ENCODE measurements at regions of chr13 and their contacts with region 1.

Region 1: GRCh38 chr13:23871616-23872220 is 17.5 kb downstream of the MIPEP start:
- DNase-seq: no peak
- ATAC-seq: peak; percentile 20; the same call in 1 of the 3 replicates
- H3K4me3 ChIP-seq: no peak overlapping the region
- H3K27ac ChIP-seq: peak overlapping the region; percentile 45
- H3K4me1 ChIP-seq: peaks cover 9% of the 10 kb centered on the region
- H3K27me3 ChIP-seq: no peaks in the 10 kb centered on the region
- CTCF ChIP-seq: peak; percentile 30 to 62 (median 48); a peak in 5 of 6 replicates
- EP300 ChIP-seq: no peak
- POLR2A ChIP-seq: no peak
- RAD21 ChIP-seq: peak; percentile 78

Region 2: GRCh38 chr13:23510979-23511735 is 360.6 kb before region 1 on chr13:
- CTCF ChIA-PET with region 1: interaction called, 7 read pairs
- POLR2A ChIA-PET with region 1: no interaction called
- RAD21 ChIA-PET with region 1: no interaction called
- SMC1A ChIA-PET with region 1: interaction called, 3 read pairs
- in situ Hi-C with region 1: no loop called
- intact Hi-C with region 1: loop called (anchors 1 kb)
- DNase-seq: peak; percentile 62
- ATAC-seq: peak; percentile 94
- H3K4me3 ChIP-seq: no peak overlapping the region
- H3K27ac ChIP-seq: peak overlapping the region; percentile 50
- H3K4me1 ChIP-seq: peaks cover 14% of the 10 kb centered on the region
- H3K27me3 ChIP-seq: no peaks in the 10 kb centered on the region; a peak in 1 of 4 replicates
- CTCF ChIP-seq: peak; percentile 42 to 61 (median 60); a peak in 5 of 6 replicates
- EP300 ChIP-seq: no peak
- POLR2A ChIP-seq: no peak
- RAD21 ChIP-seq: peak; percentile 93

Region 3: DNA sequence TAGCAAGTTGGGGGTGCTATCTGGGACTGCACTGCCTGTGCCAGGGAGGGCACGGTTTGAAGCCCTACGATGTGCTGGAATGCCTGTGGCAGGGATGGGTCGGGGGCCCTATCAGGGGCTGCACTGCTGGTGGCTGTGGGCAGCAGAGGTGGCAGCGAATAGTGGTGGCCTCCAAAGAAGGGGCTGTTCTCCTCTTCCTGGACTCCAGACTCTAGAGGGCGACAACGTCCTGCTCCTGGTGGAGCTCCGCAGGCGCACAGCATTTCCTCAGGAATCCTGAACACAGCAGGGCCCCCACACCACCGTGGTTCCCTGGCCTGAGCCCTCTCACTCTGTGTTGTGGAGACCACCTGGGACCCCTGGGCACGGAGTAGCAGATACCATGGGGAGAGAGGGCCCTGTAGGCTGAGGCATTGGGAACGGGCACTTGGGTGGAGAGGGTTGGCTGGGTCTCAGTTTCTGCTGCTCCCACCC is 155.9 kb before region 1 on chr13:
- CTCF ChIA-PET with region 1: interaction called, 11 read pairs
- POLR2A ChIA-PET with region 1: no interaction called
- RAD21 ChIA-PET with region 1: interaction called, 4 read pairs
- SMC1A ChIA-PET with region 1: interaction called, 13 read pairs
- in situ Hi-C with region 1: no loop called
- intact Hi-C with region 1: loop called (anchors 2 kb)
- DNase-seq: no peak
- ATAC-seq: peak; percentile 40
- H3K4me3 ChIP-seq: no peak overlapping the region
- H3K27ac ChIP-seq: no peak overlapping the region
- H3K4me1 ChIP-seq: peaks cover 8% of the 10 kb centered on the region
- H3K27me3 ChIP-seq: no peaks in the 10 kb centered on the region
- CTCF ChIP-seq: peak; percentile 17 to 46 (median 38); a peak in 3 of 6 replicates
- EP300 ChIP-seq: no peak
- POLR2A ChIP-seq: no peak
- RAD21 ChIP-seq: peak; percentile 56

Region 4: DNA sequence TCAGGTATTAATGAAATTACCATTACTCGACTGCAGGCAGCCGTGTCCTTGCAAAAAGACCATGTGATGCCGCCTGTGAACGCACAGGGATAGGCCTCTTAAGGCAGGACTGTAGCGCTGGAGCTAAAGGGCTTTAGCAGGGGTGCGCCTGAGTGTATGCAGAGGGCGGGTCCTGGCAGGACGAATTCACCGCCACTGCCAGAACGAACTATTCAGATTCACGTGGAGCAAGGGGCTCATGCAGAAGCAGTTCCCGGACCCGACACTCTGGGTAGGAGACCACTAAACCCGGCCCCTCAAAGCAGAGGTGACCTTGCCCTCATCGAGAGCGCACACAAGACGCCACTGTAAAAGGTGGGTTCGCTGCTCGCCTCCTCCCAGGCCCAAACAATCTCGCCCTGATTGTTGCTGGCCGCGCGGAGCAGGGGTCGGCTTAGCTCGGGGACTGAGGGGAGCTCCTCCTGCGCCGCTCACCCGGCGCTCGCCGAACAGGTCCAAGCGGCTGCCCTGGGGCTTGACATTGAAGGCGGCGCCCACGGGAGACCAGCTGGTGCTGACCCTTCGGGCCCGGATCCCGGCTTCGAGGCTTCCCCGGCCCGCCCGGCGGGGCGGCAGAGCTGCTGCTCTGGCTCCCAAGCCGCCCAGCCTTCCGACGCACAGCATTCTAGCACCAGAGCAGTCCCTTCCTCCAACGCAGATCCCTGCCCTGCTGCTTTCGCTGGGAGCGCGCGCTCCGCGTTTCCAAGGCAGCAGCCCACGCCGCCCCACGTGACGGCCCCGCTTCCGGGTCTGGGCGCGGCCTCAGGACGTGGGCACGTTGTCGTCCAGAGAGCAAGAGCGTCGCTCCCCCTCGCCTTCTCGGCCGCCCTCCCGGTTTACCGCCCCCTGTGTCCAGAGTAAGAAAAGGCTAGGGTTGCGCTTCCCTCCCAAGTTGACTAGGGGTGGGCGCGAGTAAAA is 17.2 kb after region 1 on chr13 and contains the start of gene MIPEP:
- CTCF ChIA-PET with region 1: interaction called, 17 read pairs
- POLR2A ChIA-PET with region 1: no interaction called
- RAD21 ChIA-PET with region 1: interaction called, 4 read pairs
- SMC1A ChIA-PET with region 1: interaction called, 6 read pairs
- in situ Hi-C with region 1: no loop called
- intact Hi-C with region 1: no loop called
- DNase-seq: peak; percentile 79
- ATAC-seq: peak; percentile 96
- H3K4me3 ChIP-seq: peak within 1 kb of the TSS; percentile 70
- H3K27ac ChIP-seq: peak within 1 kb of the TSS; percentile 69
- H3K4me1 ChIP-seq: no peaks in the 10 kb centered on the region
- H3K27me3 ChIP-seq: no peaks in the 10 kb centered on the region
- CTCF ChIP-seq: peak; percentile 83 to 91 (median 87)
- EP300 ChIP-seq: peak in 1 of 2 experiments; percentile 15; a peak in 1 of 4 replicates
- POLR2A ChIP-seq: peak; percentile 79
- RAD21 ChIP-seq: no peak
- polyA plus RNA-seq, gene MIPEP: 15.6 to 28.2 TPM

Region 5: GRCh38 chr13:23909606-23910005 is 37.9 kb after region 1 on chr13:
- CTCF ChIA-PET with region 1: no interaction called
- POLR2A ChIA-PET with region 1: no interaction called
- RAD21 ChIA-PET with region 1: no interaction called
- SMC1A ChIA-PET with region 1: no interaction called
- in situ Hi-C with region 1: no loop called
- intact Hi-C with region 1: no loop called
- DNase-seq: no peak
- ATAC-seq: no peak
- H3K4me3 ChIP-seq: no peak overlapping the region
- H3K27ac ChIP-seq: no peak overlapping the region
- H3K4me1 ChIP-seq: no peaks in the 10 kb centered on the region
- H3K27me3 ChIP-seq: no peaks in the 10 kb centered on the region; a peak in 1 of 4 replicates
- CTCF ChIP-seq: no peak
- EP300 ChIP-seq: no peak
- POLR2A ChIP-seq: no peak
- RAD21 ChIP-seq: no peak

Measured in GM12878 (cell line).